Ascending aorta (tissue), 2 donors: ENCODE measurements at regions of chr2 and their contacts with region 1.

Region 1: DNA sequence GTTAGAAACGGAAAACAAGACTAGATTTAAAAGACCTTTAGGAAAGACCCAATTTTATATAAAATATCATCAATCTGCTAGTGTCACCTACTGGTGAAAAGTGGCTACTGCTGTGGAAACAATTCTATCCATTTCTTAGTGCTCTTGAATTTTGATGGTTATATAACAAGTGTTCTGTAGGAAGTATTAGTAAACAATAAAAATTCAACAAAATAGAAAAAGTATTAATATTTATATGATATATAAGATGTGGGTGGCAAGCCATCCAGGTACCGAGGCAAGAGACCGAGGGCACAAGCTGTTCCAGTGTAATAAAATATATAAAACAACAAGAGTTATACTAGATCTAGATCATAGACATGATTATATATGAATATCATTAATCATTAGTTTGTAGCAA is 6.2 kb upstream of the TMEM87B start:
- DNase-seq: no peak
- H3K4me3 ChIP-seq: no peak overlapping the region
- H3K27ac ChIP-seq: no peak overlapping the region
- H3K4me1 ChIP-seq: peaks cover 0 to 19% of the 10 kb centered on the region in 2 donors
- H3K27me3 ChIP-seq: no peaks in the 10 kb centered on the region
- CTCF ChIP-seq: peak; percentile 68 to 82 (median 75)

Region 2: GRCh38 chr2:111135910-111136297 is 913.0 kb before region 1 on chr2:
- intact Hi-C with region 1: no loop called
- DNase-seq: no peak
- H3K4me3 ChIP-seq: no peak overlapping the region
- H3K27ac ChIP-seq: no peak overlapping the region
- H3K4me1 ChIP-seq: no peaks in the 10 kb centered on the region
- H3K27me3 ChIP-seq: no peaks in the 10 kb centered on the region
- CTCF ChIP-seq: no peak

Region 3: GRCh38 chr2:111887819-111888223 is 161.1 kb before region 1 on chr2:
- intact Hi-C with region 1: loop called (anchors 1 kb)
- DNase-seq: peak in 1 of 2 donors; percentile 86
- H3K4me3 ChIP-seq: no peak overlapping the region
- H3K27ac ChIP-seq: no peak overlapping the region
- H3K4me1 ChIP-seq: peaks cover 0 to 4% of the 10 kb centered on the region in 2 donors
- H3K27me3 ChIP-seq: no peaks in the 10 kb centered on the region
- CTCF ChIP-seq: peak; percentile 62 to 81 (median 65)